ENCODE measurements at regions of chr19 and their contacts with region 1.

Region 1: GRCh38 chr19:35066691-35067563 is 25.4 kb downstream of the HPN start:
- DNase-seq: peak; percentile 90 to 93
- ATAC-seq: peak; percentile 83 to 95
- H3K4me3 ChIP-seq: no peak overlapping the region; the same call in 2 of the 3 replicates
- H3K27ac ChIP-seq: no peak overlapping the region
- H3K4me1 ChIP-seq: peaks cover 9% of the 10 kb centered on the region; the same call in 2 of the 3 replicates
- CTCF ChIP-seq: peak; percentile 93
- EP300 ChIP-seq: no peak
- POLR2A ChIP-seq: no peak
- RAD21 ChIP-seq: peak; percentile 90 to 94

Region 2: GRCh38 chr19:34963573-34964409 is 103.1 kb before region 1 on chr19 and contains the start of gene ZNF792:
- CTCF ChIA-PET with region 1: interaction called, 13 read pairs
- POLR2A ChIA-PET with region 1: no interaction called
- DNase-seq: peak; percentile 59 to 94
- ATAC-seq: peak; percentile 90 to 95
- H3K4me3 ChIP-seq: peak within 1 kb of the TSS; percentile 87
- H3K27ac ChIP-seq: peak within 1 kb of the TSS; percentile 86 to 90
- H3K4me1 ChIP-seq: peaks cover 11% of the 10 kb centered on the region; the same call in 1 of the 3 replicates
- CTCF ChIP-seq: no peak
- EP300 ChIP-seq: no peak
- POLR2A ChIP-seq: peak; percentile 77
- RAD21 ChIP-seq: no peak
- polyA plus RNA-seq, gene ZNF792: 3.7 and 5.0 TPM in 2 replicates

Region 3: GRCh38 chr19:34982275-34982674 is 84.7 kb before region 1 on chr19:
- CTCF ChIA-PET with region 1: no interaction called
- POLR2A ChIA-PET with region 1: no interaction called
- DNase-seq: no peak
- ATAC-seq: no peak
- H3K4me3 ChIP-seq: no peak overlapping the region
- H3K27ac ChIP-seq: no peak overlapping the region
- H3K4me1 ChIP-seq: no peaks in the 10 kb centered on the region
- CTCF ChIP-seq: no peak
- EP300 ChIP-seq: no peak
- POLR2A ChIP-seq: no peak
- RAD21 ChIP-seq: no peak

Region 4: GRCh38 chr19:35055715-35056179 is 11.2 kb before region 1 on chr19:
- CTCF ChIA-PET with region 1: interaction called, 374 read pairs
- POLR2A ChIA-PET with region 1: no interaction called
- DNase-seq: peak in 1 of 2 experiments; percentile 51
- ATAC-seq: peak; percentile 78 to 86
- H3K4me3 ChIP-seq: no peak overlapping the region
- H3K27ac ChIP-seq: no peak overlapping the region
- H3K4me1 ChIP-seq: peaks cover 7% of the 10 kb centered on the region; the same call in 1 of the 3 replicates
- CTCF ChIP-seq: peak; percentile 45
- EP300 ChIP-seq: no peak
- POLR2A ChIP-seq: no peak
- RAD21 ChIP-seq: peak; percentile 45 to 51; a peak in 3 of 5 replicates

Region 5: GRCh38 chr19:35090506-35091237 is 23.7 kb after region 1 on chr19:
- CTCF ChIA-PET with region 1: interaction called, 50 read pairs
- POLR2A ChIA-PET with region 1: no interaction called
- DNase-seq: peak; percentile 82 to 99
- ATAC-seq: peak; percentile 82 to 92
- H3K4me3 ChIP-seq: peak overlapping the region; percentile 29; the same call in 2 of the 3 replicates
- H3K27ac ChIP-seq: peak overlapping the region; percentile 10 to 60; a peak in 4 of 6 replicates
- H3K4me1 ChIP-seq: peaks cover 11% of the 10 kb centered on the region; the same call in 2 of the 3 replicates
- CTCF ChIP-seq: peak; percentile 95
- EP300 ChIP-seq: no peak
- POLR2A ChIP-seq: no peak
- RAD21 ChIP-seq: peak; percentile 88 to 97

Region 6: DNA sequence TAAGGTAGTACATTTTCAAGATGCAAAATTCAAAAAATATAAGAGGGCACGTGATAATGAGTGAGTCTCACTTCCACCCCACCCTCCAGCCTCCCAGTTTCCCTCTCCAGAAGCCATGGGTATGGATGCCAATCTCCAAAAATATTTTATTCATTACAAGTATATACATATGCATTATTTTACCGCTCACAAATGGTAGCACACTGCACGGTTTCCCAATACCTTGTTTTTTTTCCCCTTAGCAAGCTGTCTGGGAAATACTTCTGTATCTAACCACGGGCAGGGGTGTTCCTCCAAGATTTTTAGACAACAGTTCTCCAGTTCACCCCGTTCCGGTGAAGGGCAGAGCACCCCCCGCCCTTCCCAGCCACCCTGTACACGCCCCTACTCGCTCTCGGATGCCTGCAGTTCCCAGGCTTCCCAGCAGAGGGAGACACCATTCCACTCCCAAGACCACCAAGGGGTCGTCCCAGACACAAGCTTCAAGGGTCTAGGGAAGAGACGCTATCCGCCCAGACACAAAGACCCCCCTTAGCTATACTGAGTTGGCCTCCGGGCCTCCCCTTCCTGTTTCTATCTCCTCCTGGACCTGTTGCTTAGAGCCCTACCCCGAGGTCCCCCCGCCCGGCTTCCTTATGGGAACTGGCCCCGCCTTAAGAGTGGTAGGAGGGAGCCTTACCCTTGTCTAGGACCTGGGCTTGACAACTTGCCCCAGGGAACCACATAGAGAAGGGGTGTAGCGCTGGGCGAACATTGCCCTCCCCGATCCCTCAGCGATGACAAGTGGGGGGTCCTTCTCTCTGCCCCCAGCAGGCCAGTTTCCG is 47.6 kb after region 1 on chr19:
- CTCF ChIA-PET with region 1: interaction called, 15 read pairs
- POLR2A ChIA-PET with region 1: no interaction called
- DNase-seq: peak; percentile 74 to 95
- ATAC-seq: peak; percentile 45 to 86
- H3K4me3 ChIP-seq: peak overlapping the region; percentile 6; the same call in 2 of the 3 replicates
- H3K27ac ChIP-seq: peak overlapping the region; percentile 19 to 36; a peak in 3 of 6 replicates
- H3K4me1 ChIP-seq: peaks cover 13% of the 10 kb centered on the region; the same call in 1 of the 3 replicates
- CTCF ChIP-seq: peak; percentile 98
- EP300 ChIP-seq: no peak
- POLR2A ChIP-seq: no peak
- RAD21 ChIP-seq: peak; percentile 80

Region 7: GRCh38 chr19:35140962-35141637 is 74.2 kb after region 1 on chr19:
- CTCF ChIA-PET with region 1: interaction called, 119 read pairs
- POLR2A ChIA-PET with region 1: interaction called, 3 read pairs
- DNase-seq: peak; percentile 95 to 100
- ATAC-seq: peak; percentile 59 to 86
- H3K4me3 ChIP-seq: peak overlapping the region; percentile 34
- H3K27ac ChIP-seq: peak overlapping the region in 1 of 2 experiments; percentile 52; a peak in 2 of 6 replicates
- H3K4me1 ChIP-seq: peaks cover 52% of the 10 kb centered on the region
- CTCF ChIP-seq: peak; percentile 66
- EP300 ChIP-seq: no peak
- POLR2A ChIP-seq: no peak
- RAD21 ChIP-seq: peak; percentile 65 to 82

Region 8: DNA sequence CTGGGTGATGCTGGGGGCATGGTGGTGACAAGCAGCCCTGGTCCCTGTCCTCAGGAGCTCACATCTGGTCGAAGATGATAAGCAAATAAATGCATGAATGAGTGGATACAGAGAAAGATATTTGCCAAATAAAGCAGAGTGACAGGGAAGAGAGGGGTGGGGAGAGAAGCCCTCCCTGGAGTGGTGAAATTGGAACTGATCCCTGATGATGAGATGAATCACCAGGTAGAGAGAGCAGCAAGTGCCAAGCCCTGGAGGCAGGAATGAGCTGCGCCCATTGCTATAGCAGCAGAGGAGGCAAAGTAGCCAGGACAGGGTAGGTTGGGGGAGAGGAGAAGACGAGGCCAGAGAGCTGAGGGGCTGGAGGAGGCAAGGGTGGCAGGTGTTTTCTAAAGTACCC is 101.3 kb after region 1 on chr19:
- CTCF ChIA-PET with region 1: no interaction called
- POLR2A ChIA-PET with region 1: no interaction called
- DNase-seq: no peak
- ATAC-seq: peak in 1 of 2 experiments; percentile 19; a peak in 2 of 6 replicates
- H3K4me3 ChIP-seq: no peak overlapping the region
- H3K27ac ChIP-seq: no peak overlapping the region
- H3K4me1 ChIP-seq: 0 out of 3 replicates have a peak, but pooled peaks cover 3% of the 10 kb centered on the region
- CTCF ChIP-seq: no peak
- EP300 ChIP-seq: no peak
- POLR2A ChIP-seq: no peak
- RAD21 ChIP-seq: no peak

Region 9: GRCh38 chr19:35184884-35185283 is 118.0 kb after region 1 on chr19:
- CTCF ChIA-PET with region 1: no interaction called
- POLR2A ChIA-PET with region 1: no interaction called
- DNase-seq: no peak
- ATAC-seq: 0 out of 6 replicates have a peak, but pooled peaks of 1 of the 2 experiments have one; percentile 38
- H3K4me3 ChIP-seq: no peak overlapping the region
- H3K27ac ChIP-seq: no peak overlapping the region
- H3K4me1 ChIP-seq: no peaks in the 10 kb centered on the region
- CTCF ChIP-seq: no peak
- EP300 ChIP-seq: no peak
- POLR2A ChIP-seq: no peak
- RAD21 ChIP-seq: no peak

Region 10: GRCh38 chr19:35262101-35262761 is 195.3 kb after region 1 on chr19:
- CTCF ChIA-PET with region 1: interaction called, 11 read pairs
- POLR2A ChIA-PET with region 1: no interaction called
- DNase-seq: no peak
- ATAC-seq: peak in 1 of 2 experiments; percentile 15; a peak in 3 of 6 replicates
- H3K4me3 ChIP-seq: no peak overlapping the region
- H3K27ac ChIP-seq: no peak overlapping the region
- H3K4me1 ChIP-seq: peaks cover 6% of the 10 kb centered on the region
- CTCF ChIP-seq: no peak
- EP300 ChIP-seq: no peak
- POLR2A ChIP-seq: peak; percentile 22
- RAD21 ChIP-seq: no peak